ENCODE measurements at regions of chr1 and their contacts with region 1.

Region 1: DNA sequence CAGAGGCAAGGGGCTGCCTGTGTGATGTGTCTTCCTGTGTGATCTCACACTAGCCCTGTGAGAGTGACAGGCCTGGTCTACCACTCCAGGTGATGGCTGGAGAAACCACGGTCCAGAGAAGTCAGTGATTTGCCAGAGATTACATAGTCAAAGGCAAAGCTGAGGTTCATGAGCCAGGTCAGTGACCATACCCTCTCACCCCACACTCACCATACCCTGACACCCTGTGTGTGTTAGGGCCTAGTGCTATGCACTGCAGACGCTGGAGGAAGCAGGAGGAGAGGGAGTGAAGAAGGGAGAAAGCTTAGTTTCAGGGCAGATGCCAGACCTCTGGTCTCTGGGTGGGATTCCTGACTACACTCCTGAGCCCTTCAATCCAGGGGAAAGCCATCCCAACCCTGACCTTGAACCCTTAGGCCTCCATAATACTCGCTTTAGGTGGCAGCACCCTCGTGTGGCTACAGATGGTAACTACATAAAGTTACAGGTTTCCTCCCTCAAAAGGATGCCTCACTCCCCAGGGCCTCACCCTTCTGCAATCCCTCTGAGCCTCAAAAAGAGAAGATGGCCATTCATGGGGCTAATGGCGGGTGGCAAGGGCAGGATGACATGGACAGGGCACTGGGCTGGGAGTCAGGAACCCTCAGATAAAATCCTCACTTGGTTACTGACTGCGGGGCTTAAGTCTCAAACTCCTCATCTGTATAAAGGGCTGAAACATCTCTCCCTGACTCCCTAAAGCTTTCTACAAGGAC is 20.8 kb upstream of the SDC3 start:
- DNase-seq: no peak
- ATAC-seq: peak in 3 of 4 donors; percentile 49 to 81 (median 75)
- H3K4me3 ChIP-seq: no peak overlapping the region
- H3K27ac ChIP-seq: peak overlapping the region in 1 of 12 donors; percentile 0
- H3K4me1 ChIP-seq: peaks cover 0 to 9% (median 0%) of the 10 kb centered on the region in 12 donors
- H3K27me3 ChIP-seq: no peaks in the 10 kb centered on the region
- CTCF ChIP-seq: peak; percentile 56 to 77 (median 65)
- POLR2A ChIP-seq: no peak

Region 2: GRCh38 chr1:30718636-30719405 is 210.5 kb before region 1 on chr1:
- intact Hi-C with region 1: loop called in 1 of 10 experiments (anchors 5 kb)
- DNase-seq: peak in 4 of 5 donors; percentile 80 to 98 (median 86)
- ATAC-seq: peak; percentile 73 to 88 (median 86)
- H3K4me3 ChIP-seq: peak overlapping the region; percentile 24 to 71 (median 56)
- H3K27ac ChIP-seq: peak overlapping the region; percentile 80 to 100 (median 95)
- H3K4me1 ChIP-seq: peaks cover 0 to 15% (median 8%) of the 10 kb centered on the region in 12 donors
- H3K27me3 ChIP-seq: no peaks in the 10 kb centered on the region
- CTCF ChIP-seq: peak; percentile 95 to 99 (median 98)
- POLR2A ChIP-seq: peak in 1 of 2 donors; percentile 73

Region 3: DNA sequence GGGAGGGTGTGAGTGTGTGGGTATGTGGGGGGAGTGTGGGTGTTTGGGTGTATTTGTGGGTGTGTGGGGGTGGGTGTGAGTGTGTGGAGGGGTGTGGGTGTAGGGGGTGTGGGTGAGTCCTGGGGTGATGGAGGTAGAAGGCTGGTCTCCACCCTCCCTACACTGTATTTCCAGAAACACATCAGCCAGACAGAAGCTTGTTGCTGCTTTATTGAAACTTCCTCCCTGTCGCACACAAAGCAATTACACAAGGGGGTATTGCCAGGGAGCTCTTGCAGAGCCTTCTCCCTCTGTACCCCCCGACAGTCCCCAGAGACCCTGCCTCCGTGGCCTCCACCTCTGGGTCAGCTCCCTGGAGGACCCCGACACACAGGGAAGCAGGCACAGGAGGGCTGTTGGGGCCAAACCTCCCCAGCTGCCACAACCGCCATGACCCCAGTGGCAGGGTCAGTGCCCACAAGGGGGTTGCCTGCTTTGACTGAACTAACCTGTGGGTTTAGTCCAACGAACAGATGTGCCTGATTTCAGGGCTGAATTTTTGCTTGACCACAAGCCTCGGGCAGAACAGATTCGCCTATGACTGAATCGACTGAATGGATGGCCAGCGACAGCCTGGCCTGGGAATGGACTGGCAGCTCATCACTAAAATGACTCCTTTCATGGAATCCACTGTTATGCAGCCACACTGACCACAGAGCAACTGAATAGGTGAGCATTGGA is 196.9 kb before region 1 on chr1:
- intact Hi-C with region 1: loop called in 2 of 10 experiments (anchors 5 kb)
- DNase-seq: no peak
- ATAC-seq: no peak
- H3K4me3 ChIP-seq: no peak overlapping the region
- H3K27ac ChIP-seq: peak overlapping the region in 1 of 12 donors; percentile 10
- H3K4me1 ChIP-seq: peaks cover 0 to 8% (median 0%) of the 10 kb centered on the region in 12 donors
- H3K27me3 ChIP-seq: no peaks in the 10 kb centered on the region
- CTCF ChIP-seq: no peak
- POLR2A ChIP-seq: no peak

Region 4: DNA sequence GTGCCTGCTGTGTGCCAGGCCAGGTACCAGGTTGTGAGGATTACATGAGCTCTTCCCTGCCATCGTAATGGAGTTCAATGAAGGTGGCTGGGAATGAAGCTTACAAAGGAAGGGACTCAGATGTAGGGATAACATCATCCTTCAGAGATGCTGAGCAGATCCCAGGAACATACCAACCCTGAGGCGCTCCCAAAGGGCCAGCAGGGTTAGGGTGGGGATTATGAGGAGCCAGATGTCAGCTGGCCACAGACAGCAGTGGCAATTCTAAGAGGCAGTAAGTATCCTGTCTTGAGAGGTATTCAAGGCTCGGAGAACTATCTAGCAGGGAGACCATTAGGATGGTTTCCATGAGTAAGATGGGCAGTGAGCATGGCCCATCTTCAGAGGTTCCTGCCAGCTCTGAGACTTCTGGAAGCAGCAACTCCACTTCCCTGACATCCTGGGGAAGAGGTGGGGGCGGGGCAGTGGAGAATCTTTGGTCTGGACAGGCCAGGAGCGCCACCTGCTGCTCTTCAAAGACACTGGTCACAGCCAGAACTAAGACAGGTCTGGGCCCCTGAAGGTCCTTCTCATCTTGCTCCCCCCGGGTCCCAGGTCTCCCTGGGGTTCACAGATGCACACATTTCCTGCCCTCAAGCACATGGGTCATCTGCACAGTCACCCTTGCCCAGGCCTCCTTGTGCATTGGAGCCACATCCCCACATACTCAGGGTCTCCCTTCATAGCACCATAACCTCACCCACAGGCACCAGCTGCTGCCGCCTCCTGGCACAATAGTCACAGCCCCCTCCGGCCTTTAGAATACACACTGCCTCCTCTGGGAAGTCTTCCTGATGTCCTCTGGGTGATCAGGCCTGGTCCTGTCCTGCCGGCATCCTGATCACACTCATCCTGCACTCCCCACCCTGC is 18.0 kb before region 1 on chr1:
- intact Hi-C with region 1: no loop called
- DNase-seq: peak; percentile 87 to 93 (median 88)
- ATAC-seq: peak; percentile 68 to 89 (median 78)
- H3K4me3 ChIP-seq: no peak overlapping the region
- H3K27ac ChIP-seq: peak overlapping the region in 2 of 12 donors; percentile 33 to 84
- H3K4me1 ChIP-seq: peaks cover 0 to 64% (median 17%) of the 10 kb centered on the region in 12 donors
- H3K27me3 ChIP-seq: no peaks in the 10 kb centered on the region
- CTCF ChIP-seq: peak; percentile 76 to 95 (median 88)
- POLR2A ChIP-seq: no peak

Region 5: GRCh38 chr1:31084782-31085569 is 155.7 kb after region 1 on chr1:
- intact Hi-C with region 1: no loop called
- DNase-seq: no peak
- ATAC-seq: no peak
- H3K4me3 ChIP-seq: no peak overlapping the region
- H3K27ac ChIP-seq: no peak overlapping the region
- H3K4me1 ChIP-seq: no peaks in the 10 kb centered on the region
- H3K27me3 ChIP-seq: no peaks in the 10 kb centered on the region
- CTCF ChIP-seq: no peak
- POLR2A ChIP-seq: no peak